ENCODE measurements at regions of chr1 and their contacts with region 1.

Region 1: GRCh38 chr1:203673550-203674427 is 47.2 kb downstream of the ATP2B4 start:
- DNase-seq: peak in 9 of 10 donors; percentile 43 to 85 (median 72)
- ATAC-seq: peak; percentile 88 to 92
- H3K4me3 Mint-ChIP-seq: peak overlapping the region; percentile 59 to 87 (median 77)
- H3K27ac Mint-ChIP-seq: peak overlapping the region; percentile 87 to 96 (median 92)
- H3K4me1 Mint-ChIP-seq: peaks cover 27 to 77% (median 62%) of the 10 kb centered on the region in 4 donors
- H3K27me3 Mint-ChIP-seq: no peaks in the 10 kb centered on the region

Region 2: GRCh38 chr1:203486618-203487370 is 187.0 kb before region 1 on chr1:
- POLR2A ChIA-PET with region 1: no interaction called
- DNase-seq: no peak
- ATAC-seq: no peak
- H3K4me3 Mint-ChIP-seq: peak overlapping the region; percentile 69 to 87 (median 77)
- H3K27ac Mint-ChIP-seq: peak overlapping the region in 6 of 10 donors; percentile 31 to 89 (median 64)
- H3K4me1 Mint-ChIP-seq: peaks cover 2 to 20% (median 11%) of the 10 kb centered on the region in 4 donors
- H3K27me3 Mint-ChIP-seq: no peaks in the 10 kb centered on the region

Region 3: DNA sequence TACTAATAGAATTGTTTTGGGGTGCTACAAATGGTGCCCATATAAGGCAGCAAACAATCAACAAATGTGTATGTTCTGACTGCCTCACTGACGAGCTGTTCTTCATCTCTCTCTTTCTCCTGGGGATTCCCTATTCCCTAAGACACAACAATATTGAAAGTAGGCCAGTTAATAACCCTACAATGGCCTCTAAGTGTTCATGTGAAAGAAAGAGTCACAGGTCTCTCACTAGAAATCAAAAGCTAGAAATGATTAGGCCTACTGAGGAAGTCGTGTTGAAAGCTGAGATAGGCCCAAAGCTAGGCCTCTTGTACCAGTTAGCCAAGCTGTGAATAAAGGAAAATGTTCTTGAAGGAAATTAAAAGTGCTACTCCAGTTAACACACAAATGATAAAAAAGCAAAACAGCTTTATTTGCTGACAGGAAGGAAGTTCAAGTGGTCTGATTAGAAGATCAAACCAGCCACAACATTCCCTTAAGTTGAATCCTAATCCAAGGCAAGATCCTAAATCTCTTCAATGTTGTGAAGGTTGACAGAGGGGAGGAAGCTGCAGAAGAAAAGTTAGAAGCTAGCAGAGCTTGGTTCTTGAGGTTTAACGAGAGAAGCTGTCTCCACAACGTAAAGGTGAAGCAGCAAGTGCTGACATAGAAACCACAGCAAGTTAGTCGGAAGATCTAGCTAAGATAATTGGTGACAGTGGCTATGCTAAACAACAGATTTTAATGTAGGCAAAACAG is 20.9 kb before region 1 on chr1:
- POLR2A ChIA-PET with region 1: interaction called, 13 read pairs
- DNase-seq: peak in 3 of 10 donors; percentile 55 to 62 (median 60)
- ATAC-seq: peak; percentile 52 to 68
- H3K4me3 Mint-ChIP-seq: peak overlapping the region in 9 of 10 donors; percentile 23 to 72 (median 46)
- H3K27ac Mint-ChIP-seq: peak overlapping the region; percentile 84 to 94 (median 90)
- H3K4me1 Mint-ChIP-seq: peaks cover 24 to 90% (median 56%) of the 10 kb centered on the region in 4 donors
- H3K27me3 Mint-ChIP-seq: no peaks in the 10 kb centered on the region

Measured in naive thymus-derived CD8-positive, alpha-beta T cell (primary cell).